PC-3 (cell line): ENCODE measurements at regions of chr17 and their contacts with region 1.

Region 1: DNA sequence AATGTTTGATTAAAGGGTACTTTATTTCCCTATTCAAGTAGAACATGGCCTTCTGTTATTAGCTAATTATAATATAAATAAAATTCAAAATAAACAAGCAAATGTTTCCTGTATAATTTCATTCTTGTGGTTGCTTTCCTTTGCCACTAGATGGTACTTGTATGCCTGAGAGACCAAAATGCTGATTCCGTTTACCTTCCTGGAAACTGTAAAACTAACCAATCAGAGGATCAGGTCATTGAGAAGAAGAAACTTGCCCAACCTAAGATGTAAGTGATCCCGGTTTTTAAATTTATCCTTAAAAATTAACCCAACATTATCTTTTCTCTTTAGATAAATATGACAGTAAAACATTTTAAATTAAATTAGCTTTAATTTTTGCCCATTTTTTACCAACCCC is 8.1 kb upstream of the ABCA5 start:
- DNase-seq: peak; percentile 79
- ATAC-seq: peak; percentile 77
- H3K4me3 ChIP-seq: 0 out of 2 replicates have a peak overlapping the region, but pooled peaks have one; percentile 0
- H3K27ac ChIP-seq: no peak overlapping the region
- H3K4me1 ChIP-seq: no peaks in the 10 kb centered on the region
- H3K27me3 ChIP-seq: no peaks in the 10 kb centered on the region
- CTCF ChIP-seq: peak; percentile 83

Region 2: GRCh38 chr17:69404382-69404781 is 69.3 kb after region 1 on chr17:
- CTCF ChIA-PET with region 1: no interaction called
- POLR2A ChIA-PET with region 1: no interaction called
- intact Hi-C with region 1: loop called (anchors 5 kb)
- DNase-seq: peak; percentile 74
- ATAC-seq: no peak
- H3K4me3 ChIP-seq: peak overlapping the region; percentile 12; the same call in 1 of the 2 replicates
- H3K27ac ChIP-seq: peak overlapping the region; percentile 61
- H3K4me1 ChIP-seq: peaks cover 47% of the 10 kb centered on the region
- H3K27me3 ChIP-seq: no peaks in the 10 kb centered on the region
- CTCF ChIP-seq: no peak

Region 3: DNA sequence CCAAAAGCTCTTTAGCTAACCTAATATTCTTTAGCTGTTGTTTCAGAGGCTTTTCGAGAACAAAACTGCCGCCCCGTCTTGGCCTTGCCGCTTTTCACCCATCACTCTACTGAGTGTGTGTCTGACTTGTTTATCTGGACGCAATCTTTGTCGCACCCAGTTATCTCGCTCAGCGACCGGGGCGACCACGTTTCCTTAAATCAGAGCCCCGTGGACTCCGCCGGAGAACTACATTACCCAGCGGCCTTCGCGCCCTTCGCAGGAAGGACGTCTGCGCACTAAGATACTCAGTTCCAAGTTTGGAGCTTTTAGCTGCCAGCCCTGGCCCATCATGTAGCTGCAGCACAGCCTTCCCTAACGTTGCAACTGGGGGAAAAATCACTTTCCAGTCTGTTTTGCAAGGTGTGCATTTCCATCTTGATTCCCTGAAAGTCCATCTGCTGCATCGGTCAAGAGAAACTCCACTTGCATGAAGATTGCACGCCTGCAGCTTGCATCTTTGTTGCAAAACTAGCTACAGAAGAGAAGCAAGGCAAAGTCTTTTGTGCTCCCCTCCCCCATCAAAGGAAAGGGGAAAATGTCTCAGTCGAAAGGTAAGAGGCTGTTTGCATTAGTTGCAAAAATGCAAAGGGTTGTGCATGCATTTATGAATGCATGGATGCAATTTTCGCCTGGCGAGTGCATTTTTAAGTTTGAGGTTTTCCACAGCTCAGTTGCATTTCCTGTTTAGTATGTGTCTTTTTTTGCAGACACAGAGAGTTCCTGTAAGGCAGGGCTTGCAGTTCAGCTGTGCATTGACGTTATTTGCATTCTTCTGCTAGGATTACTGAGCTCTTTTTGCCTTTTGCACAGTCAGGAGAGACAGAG is 79.6 kb after region 1 on chr17 and contains the start of gene MAP2K6:
- CTCF ChIA-PET with region 1: interaction called, 5 read pairs
- POLR2A ChIA-PET with region 1: no interaction called
- intact Hi-C with region 1: loop called (anchors 5 kb)
- DNase-seq: peak; percentile 90
- ATAC-seq: peak; percentile 92
- H3K4me3 ChIP-seq: peak within 1 kb of the TSS; percentile 72
- H3K27ac ChIP-seq: peak within 1 kb of the TSS; percentile 29
- H3K4me1 ChIP-seq: peaks cover 36% of the 10 kb centered on the region
- H3K27me3 ChIP-seq: no peaks in the 10 kb centered on the region
- CTCF ChIP-seq: no peak
- total RNA-seq, gene MAP2K6: 8.4 and 12.2 TPM in 2 replicates

Region 4: DNA sequence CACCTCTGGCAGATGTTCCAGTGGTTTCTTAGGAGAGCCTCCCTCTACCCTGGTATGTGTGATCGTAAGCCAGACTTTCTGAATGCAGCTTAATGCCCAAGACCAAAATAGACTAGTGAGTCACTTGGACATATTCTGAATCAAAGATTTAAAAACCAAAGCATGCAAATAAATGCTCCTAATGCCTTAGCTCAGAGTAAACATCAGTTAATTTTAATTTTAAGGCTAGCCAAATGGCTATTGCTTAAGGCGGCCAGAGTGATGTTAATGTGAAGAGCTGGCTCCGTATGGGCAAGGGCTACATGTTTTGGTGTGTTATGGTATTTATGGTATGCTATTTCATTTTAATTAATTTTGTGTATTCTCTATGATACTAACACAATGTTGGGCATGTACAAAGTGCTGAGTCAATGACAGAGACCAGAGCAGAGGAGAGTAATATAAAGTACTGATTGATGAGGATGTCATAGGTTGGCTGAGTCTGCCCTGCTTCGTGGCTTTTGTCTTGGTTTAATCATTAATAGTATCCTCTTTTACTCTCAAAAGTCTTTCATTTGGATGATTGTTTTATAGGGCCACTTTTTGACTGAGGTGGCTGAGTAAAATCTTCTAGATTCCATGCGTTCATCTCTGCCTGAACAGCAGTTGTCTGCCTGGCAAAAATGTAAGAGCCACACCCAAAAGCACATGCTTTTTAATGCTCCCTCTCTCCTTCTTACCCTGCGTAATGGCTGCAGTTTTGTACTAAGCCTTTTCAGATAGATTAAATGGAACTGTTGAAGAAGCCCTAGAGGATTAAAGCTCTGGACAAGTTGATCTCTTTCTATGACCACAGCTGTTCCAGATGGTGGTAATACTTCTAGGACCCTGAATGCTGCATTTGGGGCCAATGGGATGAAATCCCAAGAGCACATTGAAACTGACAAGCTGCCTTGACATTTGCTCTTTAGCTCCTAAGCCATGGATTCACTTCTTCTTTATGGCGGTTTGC is 139.1 kb after region 1 on chr17:
- CTCF ChIA-PET with region 1: no interaction called
- POLR2A ChIA-PET with region 1: no interaction called
- intact Hi-C with region 1: loop called (anchors 5 kb)
- DNase-seq: peak; percentile 18
- ATAC-seq: peak; percentile 84
- H3K4me3 ChIP-seq: no peak overlapping the region
- H3K27ac ChIP-seq: 0 out of 2 replicates have a peak overlapping the region, but pooled peaks have one; percentile 5
- H3K4me1 ChIP-seq: peaks cover 15% of the 10 kb centered on the region
- H3K27me3 ChIP-seq: no peaks in the 10 kb centered on the region
- CTCF ChIP-seq: no peak

Region 5: DNA sequence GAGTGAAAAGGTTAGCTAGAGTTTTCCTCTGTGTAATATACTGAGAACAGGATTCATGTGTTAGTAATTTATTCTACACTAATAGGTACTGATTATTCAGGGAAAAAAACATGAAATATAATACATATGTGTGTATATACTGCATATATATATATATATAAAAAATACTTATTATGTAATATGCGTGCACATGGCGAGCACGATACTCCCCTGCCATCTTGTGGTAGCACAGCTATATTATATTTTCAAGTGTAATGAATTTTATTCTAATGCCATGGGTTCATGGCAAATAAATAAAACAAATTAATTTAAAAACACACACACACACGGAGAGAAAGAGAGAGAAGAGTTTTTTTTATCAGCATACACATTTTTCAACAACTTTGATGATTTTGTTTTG is 1294.8 kb after region 1 on chr17:
- CTCF ChIA-PET with region 1: interaction called, 5 read pairs
- POLR2A ChIA-PET with region 1: no interaction called
- intact Hi-C with region 1: loop called (anchors 5 kb)
- DNase-seq: peak; percentile 56
- ATAC-seq: peak; percentile 49; the same call in 1 of the 2 replicates
- H3K4me3 ChIP-seq: no peak overlapping the region
- H3K27ac ChIP-seq: no peak overlapping the region
- H3K4me1 ChIP-seq: no peaks in the 10 kb centered on the region
- H3K27me3 ChIP-seq: peaks cover 29% of the 10 kb centered on the region
- CTCF ChIP-seq: peak; percentile 57